HCT116 (cell line): ENCODE measurements at regions of chr3 and their contacts with region 1.

Region 1: GRCh38 chr3:81643721-81644120 is 117.7 kb downstream of the GBE1 start:
- DNase-seq: peak; percentile 4
- ATAC-seq: peak; percentile 72
- H3K4me3 ChIP-seq: no peak overlapping the region
- H3K27ac ChIP-seq: no peak overlapping the region
- H3K4me1 ChIP-seq: no peaks in the 10 kb centered on the region
- H3K27me3 ChIP-seq: no peaks in the 10 kb centered on the region
- CTCF ChIP-seq: peak in 2 of 3 experiments; percentile 30 to 42; a peak in 3 of 6 replicates
- POLR2A ChIP-seq: no peak
- RAD21 ChIP-seq: peak; percentile 31; the same call in 1 of the 2 replicates

Region 2: DNA sequence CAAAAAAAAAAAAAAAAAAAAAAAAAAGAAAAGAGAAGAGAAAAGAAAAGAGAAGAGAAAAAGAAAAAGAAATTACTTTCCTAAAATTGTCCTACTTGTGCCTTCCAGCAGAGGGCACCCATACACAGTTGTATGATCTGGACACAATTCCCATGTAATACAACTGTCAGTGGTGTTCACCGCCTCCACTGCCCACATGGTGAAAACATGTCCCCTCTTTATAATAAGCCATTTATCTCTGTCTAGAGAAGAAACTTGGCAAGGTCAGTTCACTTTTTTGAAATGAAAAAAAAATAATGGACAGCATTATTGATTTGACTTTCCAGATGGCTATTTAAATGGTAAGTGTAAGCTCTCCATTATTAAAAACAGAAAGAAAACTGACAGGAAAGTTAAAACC is 341.7 kb before region 1 on chr3:
- CTCF ChIA-PET with region 1: interaction called, 3 read pairs
- POLR2A ChIA-PET with region 1: no interaction called
- RAD21 ChIA-PET with region 1: no interaction called
- intact Hi-C with region 1: loop called (anchors 1 kb)
- DNase-seq: peak; percentile 13
- ATAC-seq: no peak
- H3K4me3 ChIP-seq: no peak overlapping the region
- H3K27ac ChIP-seq: no peak overlapping the region
- H3K4me1 ChIP-seq: no peaks in the 10 kb centered on the region
- H3K27me3 ChIP-seq: no peaks in the 10 kb centered on the region
- CTCF ChIP-seq: peak in 2 of 3 experiments; percentile 57 to 69; a peak in 4 of 6 replicates
- POLR2A ChIP-seq: no peak
- RAD21 ChIP-seq: peak; percentile 40; the same call in 1 of the 2 replicates

Region 3: DNA sequence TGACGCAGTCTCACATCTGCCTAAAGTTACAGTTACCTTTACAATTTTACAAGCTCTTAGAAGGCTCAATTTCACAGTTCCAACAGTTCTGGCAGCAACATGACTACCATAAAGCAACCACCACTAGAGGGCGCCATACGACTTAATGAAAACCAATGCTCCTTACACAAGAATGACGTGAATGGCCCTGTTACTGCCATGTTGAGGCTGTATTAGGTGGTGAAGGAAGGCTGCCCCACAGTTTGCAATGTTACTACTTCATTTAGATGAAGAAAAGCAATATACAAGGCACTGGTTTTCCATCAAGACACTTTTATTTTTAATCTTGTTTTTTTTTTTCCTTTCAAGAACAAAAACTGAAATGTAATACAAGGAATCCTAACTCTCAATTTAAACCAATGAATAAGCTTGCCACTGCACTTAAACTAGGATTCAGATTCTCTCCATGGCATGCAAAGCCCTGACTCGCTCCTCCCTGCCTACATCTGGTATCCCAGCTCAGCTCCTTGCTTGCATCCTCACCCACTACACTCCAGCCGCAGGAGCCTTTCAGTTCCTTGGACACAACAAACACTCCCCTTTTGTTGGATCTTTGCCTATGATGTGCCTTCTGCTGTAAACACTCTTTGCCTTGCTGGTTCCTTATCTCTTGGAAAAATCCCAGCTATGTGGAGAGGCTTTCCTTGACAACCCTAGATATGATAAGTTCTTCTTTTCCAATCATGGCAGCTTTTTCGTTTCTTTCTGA is 153.0 kb before region 1 on chr3:
- CTCF ChIA-PET with region 1: interaction called, 15 read pairs
- POLR2A ChIA-PET with region 1: no interaction called
- RAD21 ChIA-PET with region 1: no interaction called
- intact Hi-C with region 1: loop called (anchors 1 kb)
- DNase-seq: peak; percentile 77
- ATAC-seq: peak; percentile 91
- H3K4me3 ChIP-seq: no peak overlapping the region
- H3K27ac ChIP-seq: no peak overlapping the region
- H3K4me1 ChIP-seq: no peaks in the 10 kb centered on the region
- H3K27me3 ChIP-seq: no peaks in the 10 kb centered on the region
- CTCF ChIP-seq: peak; percentile 24 to 84 (median 75); a peak in 5 of 6 replicates
- POLR2A ChIP-seq: no peak
- RAD21 ChIP-seq: peak; percentile 50

Region 4: DNA sequence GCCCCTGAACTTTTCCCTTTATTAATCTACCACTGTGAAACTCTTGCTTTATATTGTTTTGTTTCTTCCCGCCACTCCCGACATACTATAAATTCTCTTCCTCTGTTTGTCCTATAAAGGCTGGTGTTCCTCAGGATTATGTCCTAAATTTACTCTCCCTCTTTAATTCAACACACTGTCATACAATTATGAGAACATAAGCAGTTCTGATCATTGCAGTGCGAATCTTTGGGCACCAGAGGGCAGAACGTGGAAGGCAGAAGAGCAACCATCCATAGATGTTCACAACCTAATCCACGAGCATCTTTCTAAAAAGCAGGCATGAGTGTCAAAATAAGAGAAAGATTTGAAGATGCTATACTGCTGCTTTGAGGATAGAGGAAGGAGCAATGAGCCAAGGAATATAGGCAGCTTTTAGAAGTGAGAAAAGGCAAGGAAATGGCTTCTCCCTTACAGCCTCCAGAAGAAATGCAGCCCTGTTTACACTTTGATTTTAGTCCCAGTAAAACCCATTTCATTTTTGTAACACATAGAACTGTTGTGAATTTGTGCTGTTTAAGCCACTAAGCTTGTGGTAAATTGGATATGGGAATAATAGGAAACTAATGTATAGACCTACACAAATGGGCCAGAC is 61.6 kb before region 1 on chr3:
- CTCF ChIA-PET with region 1: no interaction called
- POLR2A ChIA-PET with region 1: no interaction called
- RAD21 ChIA-PET with region 1: no interaction called
- intact Hi-C with region 1: loop called (anchors 2 kb)
- DNase-seq: peak; percentile 15
- ATAC-seq: peak; percentile 78
- H3K4me3 ChIP-seq: no peak overlapping the region
- H3K27ac ChIP-seq: no peak overlapping the region
- H3K4me1 ChIP-seq: no peaks in the 10 kb centered on the region
- H3K27me3 ChIP-seq: no peaks in the 10 kb centered on the region
- CTCF ChIP-seq: peak in 2 of 3 experiments; percentile 79 to 85; a peak in 4 of 6 replicates
- POLR2A ChIP-seq: no peak
- RAD21 ChIP-seq: peak; percentile 47; the same call in 1 of the 2 replicates

Region 5: DNA sequence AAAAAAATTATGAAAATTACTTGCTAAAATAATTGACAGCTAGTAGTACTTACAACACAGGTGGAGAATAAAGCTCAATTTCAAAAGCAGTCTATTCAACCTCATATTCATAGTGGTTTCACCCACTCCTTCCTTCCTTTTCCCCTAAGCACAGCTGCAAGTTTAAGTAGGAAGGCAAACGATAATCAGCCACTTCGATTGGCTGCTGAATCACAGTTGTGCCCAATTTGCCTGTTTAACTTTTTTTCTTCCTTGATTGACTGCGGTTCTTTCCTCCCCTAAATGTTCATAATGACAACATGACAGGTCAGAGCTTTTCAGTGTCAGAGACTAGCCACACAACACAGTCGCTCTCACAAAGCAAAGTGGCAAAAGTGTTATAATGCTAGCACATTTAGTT is 585.7 kb after region 1 on chr3:
- CTCF ChIA-PET with region 1: no interaction called
- POLR2A ChIA-PET with region 1: no interaction called
- RAD21 ChIA-PET with region 1: no interaction called
- intact Hi-C with region 1: no loop called
- DNase-seq: no peak
- ATAC-seq: no peak
- H3K4me3 ChIP-seq: no peak overlapping the region
- H3K27ac ChIP-seq: no peak overlapping the region
- H3K4me1 ChIP-seq: no peaks in the 10 kb centered on the region
- H3K27me3 ChIP-seq: no peaks in the 10 kb centered on the region
- CTCF ChIP-seq: no peak
- POLR2A ChIP-seq: no peak
- RAD21 ChIP-seq: no peak